Activated CD4-positive, alpha-beta T cell treated with anti-CD3 and anti-CD28 coated beads for 36 hours (primary cell): ENCODE measurements at regions of chr14 and their contacts with region 1.

Region 1: GRCh38 chr14:21414137-21414631 is 30.4 kb upstream of the SUPT16H start:
- DNase-seq: no peak
- ATAC-seq: peak; percentile 91
- H3K4me3 Mint-ChIP-seq: no peak overlapping the region
- H3K27ac Mint-ChIP-seq: peak overlapping the region; percentile 88
- H3K4me1 Mint-ChIP-seq: peaks cover 26% of the 10 kb centered on the region
- H3K27me3 Mint-ChIP-seq: no peaks in the 10 kb centered on the region

Region 2: DNA sequence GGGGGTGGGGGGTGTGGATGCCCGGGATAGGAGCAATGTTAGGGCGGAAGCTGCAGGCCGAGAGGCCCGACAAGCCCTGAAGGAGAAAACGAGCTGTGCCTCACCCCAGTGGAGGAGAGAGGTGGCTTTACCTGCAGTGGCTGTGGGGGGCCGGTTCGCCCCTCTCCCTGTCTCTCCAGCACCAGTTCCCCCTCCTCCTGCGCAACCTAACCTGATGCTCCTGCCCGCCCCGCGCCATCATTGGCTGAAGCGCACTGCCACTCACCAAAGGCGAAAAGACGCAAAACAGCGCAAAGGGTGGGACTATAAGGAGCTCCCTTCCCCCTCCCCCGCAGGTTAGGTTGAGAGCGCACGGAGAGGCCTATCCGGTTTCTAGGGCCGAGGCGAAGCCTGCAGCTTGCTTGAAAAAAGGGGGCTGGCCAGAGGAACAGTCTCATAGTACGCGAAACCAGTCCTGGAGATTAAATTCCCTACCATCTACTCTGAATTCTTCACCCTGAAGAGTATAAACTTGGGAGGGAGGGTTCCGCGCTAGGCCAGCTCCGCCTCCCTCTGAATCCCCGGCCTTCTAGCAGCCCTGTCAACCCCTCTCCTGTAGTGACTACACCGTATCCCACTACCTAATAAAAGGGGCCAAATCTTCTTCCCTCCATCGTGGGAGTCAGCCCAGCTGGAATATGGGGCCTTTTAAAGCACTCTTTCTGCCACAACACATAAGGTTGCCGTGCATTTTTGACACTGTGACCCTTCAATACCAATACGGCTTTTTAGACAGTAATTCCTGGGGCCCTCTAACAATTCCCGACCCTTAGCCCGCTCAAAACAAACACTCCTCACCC is 23.1 kb after region 1 on chr14:
- CTCF ChIA-PET with region 1: no interaction called
- POLR2A ChIA-PET with region 1: no interaction called
- intact Hi-C with region 1: loop called in 1 of 2 experiments (anchors 1 kb)
- DNase-seq: peak; percentile 99
- ATAC-seq: peak; percentile 99
- H3K4me3 Mint-ChIP-seq: peak overlapping the region; percentile 95
- H3K27ac Mint-ChIP-seq: peak overlapping the region; percentile 87
- H3K4me1 Mint-ChIP-seq: peaks cover 57% of the 10 kb centered on the region
- H3K27me3 Mint-ChIP-seq: no peaks in the 10 kb centered on the region